ENCODE measurements at regions of chr1 and their contacts with region 1.

Region 1: DNA sequence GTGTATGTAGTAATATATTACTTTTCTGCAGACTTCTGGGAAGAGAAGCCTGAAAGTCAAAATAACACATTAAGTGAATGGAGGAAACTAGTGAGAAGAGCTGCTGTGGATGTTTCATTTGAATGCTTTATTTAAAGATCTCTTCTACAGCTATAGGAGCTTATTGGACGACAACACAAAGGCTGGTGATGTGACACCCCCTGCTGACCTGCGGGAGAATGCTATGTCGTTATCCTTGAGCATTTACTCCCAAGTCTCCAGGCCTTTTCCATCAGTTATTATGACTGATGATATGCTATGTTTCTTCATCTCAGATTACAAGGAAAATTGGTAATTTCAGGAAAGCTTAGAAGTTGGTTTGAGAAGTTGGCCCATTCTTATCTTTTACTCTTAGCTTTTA is 22.3 kb upstream of the PLA2G4A start:
- DNase-seq: peak; percentile 48 to 57 (median 54)
- H3K4me3 ChIP-seq: no peak overlapping the region
- H3K27ac ChIP-seq: no peak overlapping the region
- H3K4me1 ChIP-seq: no peaks in the 10 kb centered on the region
- H3K27me3 ChIP-seq: no peaks in the 10 kb centered on the region

Region 2: GRCh38 chr1:186689376-186689775 is 117.1 kb before region 1 on chr1:
- CTCF ChIA-PET with region 1: interaction called, 11 read pairs
- POLR2A ChIA-PET with region 1: no interaction called
- DNase-seq: no peak
- H3K4me3 ChIP-seq: no peak overlapping the region
- H3K27ac ChIP-seq: no peak overlapping the region
- H3K4me1 ChIP-seq: peaks cover 0 to 4% (median 0%) of the 10 kb centered on the region in 4 experiments
- H3K27me3 ChIP-seq: no peaks in the 10 kb centered on the region

Measured in common myeloid progenitor, CD34-positive (primary cell).